ENCODE measurements at regions of chr5 and their contacts with region 1.

Region 1: GRCh38 chr5:146965761-146966659 is 87.5 kb upstream of the PPP2R2B start:
- DNase-seq: peak in 1 of 2 donors; percentile 46
- ATAC-seq: peak; percentile 90
- H3K4me3 ChIP-seq: no peak overlapping the region
- H3K27ac ChIP-seq: no peak overlapping the region
- H3K4me1 ChIP-seq: peaks cover 1 to 3% of the 10 kb centered on the region in 2 donors
- H3K27me3 ChIP-seq: no peaks in the 10 kb centered on the region

Region 2: DNA sequence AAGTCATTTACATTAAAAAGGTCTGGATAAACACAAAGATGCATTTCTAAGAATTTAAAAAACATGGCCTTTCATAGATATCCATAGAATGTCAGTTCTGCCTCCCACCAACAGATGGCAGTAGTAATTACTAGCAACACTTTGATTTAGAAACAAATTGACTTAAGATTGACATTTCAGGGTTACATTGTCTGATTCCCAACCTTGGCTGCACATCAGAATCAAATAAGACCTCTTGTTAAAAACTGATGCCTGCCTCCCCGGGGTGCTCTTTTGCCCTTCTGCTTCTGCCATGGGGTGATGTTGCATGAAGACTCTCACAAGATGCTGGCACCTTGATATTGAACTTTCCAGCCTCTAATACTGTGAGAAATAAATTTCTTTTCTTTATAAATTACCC is 303.8 kb before region 1 on chr5:
- intact Hi-C with region 1: loop called (anchors 5 to 10 kb)
- DNase-seq: no peak
- ATAC-seq: no peak
- H3K4me3 ChIP-seq: no peak overlapping the region
- H3K27ac ChIP-seq: no peak overlapping the region
- H3K4me1 ChIP-seq: peaks cover 2 to 4% of the 10 kb centered on the region in 2 donors
- H3K27me3 ChIP-seq: no peaks in the 10 kb centered on the region

Region 3: GRCh38 chr5:146794326-146795029 is 171.5 kb before region 1 on chr5:
- intact Hi-C with region 1: loop called in 1 of 2 experiments (anchors 10 kb)
- DNase-seq: no peak
- ATAC-seq: peak; percentile 58
- H3K4me3 ChIP-seq: no peak overlapping the region
- H3K27ac ChIP-seq: no peak overlapping the region
- H3K4me1 ChIP-seq: peaks cover 11 to 20% of the 10 kb centered on the region in 2 donors
- H3K27me3 ChIP-seq: no peaks in the 10 kb centered on the region

Region 4: DNA sequence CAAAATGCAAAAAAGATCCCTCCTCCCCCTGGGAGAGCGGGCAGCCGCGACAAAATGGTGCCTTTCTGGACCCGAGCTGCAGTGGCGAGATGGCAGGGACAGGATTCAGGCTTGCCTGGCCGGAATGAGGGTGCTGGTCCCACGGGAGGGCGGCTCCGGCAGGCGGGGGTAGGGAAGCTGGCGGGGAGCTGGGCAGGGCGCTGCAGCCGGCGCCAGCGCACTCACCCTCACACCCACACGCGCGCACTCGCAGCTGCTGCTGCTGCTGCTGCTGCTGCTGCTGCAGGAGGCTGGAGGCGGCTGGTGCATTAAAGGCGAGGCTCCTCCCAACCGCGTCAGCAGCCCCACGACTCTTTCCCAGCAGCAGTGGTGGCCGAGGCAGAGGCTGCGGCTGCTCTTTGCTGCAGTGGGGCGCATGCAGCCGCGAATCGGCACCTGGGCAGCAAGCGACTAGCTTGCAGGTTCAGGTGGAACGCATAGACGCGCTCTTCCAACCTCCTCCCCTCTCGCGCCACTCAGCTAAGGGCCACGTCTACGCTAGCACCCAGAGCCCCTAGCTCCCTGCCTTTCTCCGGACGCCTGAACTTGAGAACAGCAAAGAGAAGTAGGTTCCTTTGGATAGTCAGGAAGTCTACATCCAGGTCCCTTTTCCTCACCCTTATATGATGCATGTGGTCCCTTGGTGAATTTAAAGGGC is 87.4 kb before region 1 on chr5 and contains the start of gene PPP2R2B:
- intact Hi-C with region 1: loop called in 1 of 2 experiments (anchors 5 kb)
- DNase-seq: peak; percentile 78 to 89
- ATAC-seq: peak; percentile 84
- H3K4me3 ChIP-seq: peak within 1 kb of the TSS; percentile 79 to 89
- H3K27ac ChIP-seq: peak within 1 kb of the TSS in 1 of 2 donors; percentile 78
- H3K4me1 ChIP-seq: peaks cover 0 to 6% of the 10 kb centered on the region in 2 donors
- H3K27me3 ChIP-seq: no peaks in the 10 kb centered on the region
- total RNA-seq, gene PPP2R2B: 15.0 to 27.3 TPM

Region 5: DNA sequence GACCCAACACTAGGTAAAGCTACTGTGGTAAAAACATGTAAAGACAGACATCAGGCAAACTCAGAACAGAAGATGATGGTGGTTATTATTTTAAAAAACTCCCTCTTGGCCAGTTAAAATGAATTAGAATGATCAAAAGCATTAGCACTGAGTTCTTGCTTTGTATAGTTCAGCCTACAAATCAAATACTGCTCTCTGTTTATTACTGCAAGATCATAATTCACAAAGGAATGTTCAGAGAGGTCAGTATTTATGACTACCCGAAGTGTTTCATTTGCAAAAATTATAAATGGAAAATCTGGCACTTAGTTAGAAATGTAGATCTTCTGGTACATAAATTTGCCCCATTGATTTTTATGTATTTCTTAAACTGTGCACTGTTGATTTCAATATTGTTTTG is 52.8 kb after region 1 on chr5:
- intact Hi-C with region 1: no loop called
- DNase-seq: no peak
- ATAC-seq: no peak
- H3K4me3 ChIP-seq: no peak overlapping the region
- H3K27ac ChIP-seq: no peak overlapping the region
- H3K4me1 ChIP-seq: no peaks in the 10 kb centered on the region
- H3K27me3 ChIP-seq: no peaks in the 10 kb centered on the region

Region 6: GRCh38 chr5:147055850-147056566 is 90.0 kb after region 1 on chr5:
- intact Hi-C with region 1: no loop called
- DNase-seq: no peak
- ATAC-seq: no peak
- H3K4me3 ChIP-seq: no peak overlapping the region
- H3K27ac ChIP-seq: no peak overlapping the region
- H3K4me1 ChIP-seq: no peaks in the 10 kb centered on the region
- H3K27me3 ChIP-seq: no peaks in the 10 kb centered on the region

Measured in aorta (tissue), 5 donors.